CD8-positive, alpha-beta T cell (primary cell): ENCODE measurements at regions of chr17 and their contacts with region 1.

Region 1: DNA sequence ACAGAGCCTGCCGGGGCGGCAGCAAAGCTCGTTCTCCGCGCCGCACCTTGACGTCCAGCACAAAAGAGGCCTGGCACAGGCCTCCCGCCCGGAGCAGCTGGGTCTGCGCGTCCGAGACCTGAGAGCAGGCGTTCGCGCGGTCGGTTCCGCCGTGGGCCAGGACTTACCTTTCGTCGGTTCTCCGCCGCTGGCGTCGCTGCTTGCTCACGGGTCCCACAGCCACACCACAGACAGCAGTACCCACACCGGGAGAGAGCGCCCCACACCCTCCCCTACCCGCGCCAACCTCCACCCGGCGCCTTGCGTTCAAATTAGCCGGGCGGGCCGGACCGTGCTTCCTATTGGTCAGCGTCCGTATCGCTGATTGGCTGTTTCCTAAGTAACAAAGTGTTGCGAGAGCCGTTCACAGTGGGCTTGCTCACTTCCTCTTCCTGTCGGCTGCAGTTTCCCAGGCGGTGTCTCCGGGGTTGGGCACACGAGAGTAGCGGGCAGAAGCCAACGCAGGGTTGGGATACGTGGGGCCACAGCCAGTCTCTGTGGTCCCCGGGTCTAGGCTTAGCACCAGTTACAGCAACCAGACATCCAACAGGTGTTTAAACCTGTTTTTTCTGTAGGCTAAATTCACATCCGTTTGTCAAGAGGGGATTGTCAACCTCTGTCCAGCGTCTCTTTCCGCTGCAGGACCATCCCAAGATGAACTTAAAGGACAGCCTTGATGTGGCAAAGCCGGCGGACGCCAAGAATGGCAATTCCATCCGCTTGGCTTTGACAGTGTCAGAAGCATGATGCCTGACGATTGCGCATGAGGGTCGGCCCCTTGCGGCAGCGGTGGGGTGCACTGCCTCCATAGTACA is at the start of gene KIF18B:
- DNase-seq: peak; percentile 72 to 94 (median 87)
- ATAC-seq: peak; percentile 97
- H3K4me3 ChIP-seq: peak within 1 kb of the TSS; percentile 57 to 68
- H3K4me3 Mint-ChIP-seq: peak within 1 kb of the TSS; percentile 93
- H3K27ac ChIP-seq: peak within 1 kb of the TSS; percentile 47 to 67
- H3K27ac Mint-ChIP-seq: peak within 1 kb of the TSS; percentile 93
- H3K4me1 ChIP-seq: peaks cover 9% of the 10 kb centered on the region
- H3K4me1 Mint-ChIP-seq: peaks cover 13% of the 10 kb centered on the region
- H3K27me3 ChIP-seq: peaks cover 0 to 5% of the 10 kb centered on the region in 2 experiments
- H3K27me3 Mint-ChIP-seq: peaks cover 5% of the 10 kb centered on the region
- CTCF ChIP-seq: no peak
- total RNA-seq, gene KIF18B: 0.11 TPM in 1 of 2 experiments, not detected in the other

Region 2: GRCh38 chr17:44968226-44969143 is 20.8 kb after region 1 on chr17 and contains the start of gene C1QL1:
- CTCF ChIA-PET with region 1: no interaction called
- POLR2A ChIA-PET with region 1: no interaction called
- intact Hi-C with region 1: loop called (anchors 1 kb)
- DNase-seq: peak; percentile 67 to 91 (median 82)
- ATAC-seq: peak; percentile 93
- H3K4me3 ChIP-seq: peak within 1 kb of the TSS; percentile 41 to 55
- H3K4me3 Mint-ChIP-seq: peak within 1 kb of the TSS; percentile 76
- H3K27ac ChIP-seq: no peak within 1 kb of the TSS
- H3K27ac Mint-ChIP-seq: no peak within 1 kb of the TSS
- H3K4me1 ChIP-seq: peaks cover 29% of the 10 kb centered on the region
- H3K4me1 Mint-ChIP-seq: peaks cover 36% of the 10 kb centered on the region
- H3K27me3 ChIP-seq: peaks cover 39 to 41% of the 10 kb centered on the region in 2 experiments
- H3K27me3 Mint-ChIP-seq: peaks cover 55% of the 10 kb centered on the region
- CTCF ChIP-seq: no peak
- total RNA-seq, gene C1QL1: not detected

Region 3: GRCh38 chr17:45051060-45051719 is 103.5 kb after region 1 on chr17 and contains the start of gene DCAKD:
- CTCF ChIA-PET with region 1: no interaction called
- POLR2A ChIA-PET with region 1: no interaction called
- intact Hi-C with region 1: loop called in 1 of 2 experiments (anchors 2 kb)
- DNase-seq: peak; percentile 76 to 97 (median 85)
- ATAC-seq: peak; percentile 90
- H3K4me3 ChIP-seq: peak within 1 kb of the TSS; percentile 61 to 82
- H3K4me3 Mint-ChIP-seq: peak within 1 kb of the TSS; percentile 86
- H3K27ac ChIP-seq: peak within 1 kb of the TSS; percentile 78 to 95
- H3K27ac Mint-ChIP-seq: peak within 1 kb of the TSS; percentile 94
- H3K4me1 ChIP-seq: peaks cover 29% of the 10 kb centered on the region
- H3K4me1 Mint-ChIP-seq: peaks cover 36% of the 10 kb centered on the region
- H3K27me3 ChIP-seq: no peaks in the 10 kb centered on the region
- H3K27me3 Mint-ChIP-seq: no peaks in the 10 kb centered on the region
- CTCF ChIP-seq: no peak
- total RNA-seq, gene DCAKD: 8.3 to 8.4 TPM